WTC11 (cell line): ENCODE measurements at regions of chr11 and their contacts with region 1.

Region 1: DNA sequence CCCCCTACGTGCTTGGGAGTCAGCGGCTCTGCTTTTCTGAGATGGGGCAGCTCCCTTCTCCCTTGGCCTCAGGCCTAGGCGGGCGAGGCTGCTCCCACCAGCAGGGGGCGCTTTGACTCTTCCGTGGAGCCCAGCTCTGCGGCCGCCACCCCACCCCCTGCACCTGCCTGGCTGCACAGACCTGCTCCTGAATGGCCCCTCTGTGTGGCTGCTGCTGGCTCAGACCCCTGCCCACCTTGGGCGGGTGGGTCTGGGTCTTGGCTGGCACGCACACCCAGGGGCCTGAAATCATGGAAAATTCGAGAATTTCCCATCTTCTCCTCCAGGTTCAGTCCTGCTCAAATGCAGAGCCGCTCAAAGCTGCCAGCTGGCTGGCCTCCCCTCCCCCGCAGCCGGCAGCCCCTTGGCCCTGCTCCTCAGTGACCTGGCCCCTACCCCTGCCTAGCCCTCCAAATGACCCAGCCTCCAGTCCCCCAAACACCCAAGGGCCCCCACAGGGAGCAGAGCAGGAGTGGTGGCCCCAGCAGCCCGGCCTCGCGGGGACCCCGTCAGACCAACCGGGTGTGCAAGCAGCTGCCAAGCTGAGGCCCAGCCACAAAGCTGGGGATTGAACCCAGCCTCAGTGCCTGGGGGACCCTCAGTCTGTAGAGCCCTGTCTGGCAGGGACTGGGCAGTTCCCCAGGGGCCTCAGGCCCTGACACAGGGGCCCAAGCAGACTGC is 9.0 kb downstream of the PRR33 start:
- DNase-seq: peak; percentile 89
- ATAC-seq: peak; percentile 97
- H3K4me3 Mint-ChIP-seq: no peak overlapping the region
- H3K27ac Mint-ChIP-seq: no peak overlapping the region
- H3K4me1 Mint-ChIP-seq: no peaks in the 10 kb centered on the region
- H3K27me3 Mint-ChIP-seq: no peaks in the 10 kb centered on the region
- CTCF ChIP-seq: peak; percentile 95

Region 2: DNA sequence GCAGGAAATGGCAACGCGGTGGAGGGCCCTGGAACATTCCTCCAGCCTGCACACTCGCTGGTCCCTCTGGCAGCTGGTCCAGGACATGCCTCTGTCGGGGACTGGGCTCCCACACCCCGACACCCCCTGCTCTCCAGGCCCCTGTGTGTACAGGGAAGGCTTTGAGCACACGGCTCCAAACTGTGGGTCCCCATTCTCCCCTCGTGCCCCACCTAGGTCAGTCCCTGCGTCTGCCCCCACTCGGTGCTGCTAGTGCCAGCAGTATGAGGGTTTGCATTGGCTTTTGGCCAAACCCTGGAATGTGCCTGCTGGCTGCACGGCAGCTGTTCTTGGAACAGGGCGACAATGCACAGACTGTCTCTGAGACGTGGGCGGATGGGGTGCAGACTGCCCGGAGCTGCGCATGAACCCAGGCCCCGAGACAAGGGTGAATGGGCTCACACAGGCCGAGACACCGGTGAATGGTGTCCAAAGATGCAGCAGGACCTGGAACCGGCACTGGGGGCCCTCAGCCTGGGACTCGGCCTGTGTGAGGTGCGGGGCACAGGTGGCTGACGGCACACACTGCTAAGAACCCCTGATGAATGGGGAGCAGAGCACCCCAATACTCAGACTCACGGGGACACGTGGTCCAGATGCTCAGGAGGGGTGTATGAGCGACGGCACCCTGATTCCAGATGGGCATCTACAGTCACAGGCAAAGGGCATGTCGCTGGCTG is 55.4 kb before region 1 on chr11:
- CTCF ChIA-PET with region 1: interaction called, 25 read pairs
- POLR2A ChIA-PET with region 1: no interaction called
- DNase-seq: no peak
- ATAC-seq: no peak
- H3K4me3 Mint-ChIP-seq: no peak overlapping the region
- H3K27ac Mint-ChIP-seq: no peak overlapping the region
- H3K4me1 Mint-ChIP-seq: peaks cover 4% of the 10 kb centered on the region; the same call in 1 of the 2 replicates
- H3K27me3 Mint-ChIP-seq: no peaks in the 10 kb centered on the region; the same call in 1 of the 2 replicates
- CTCF ChIP-seq: no peak

Region 3: GRCh38 chr11:1864831-1865665 is 17.6 kb before region 1 on chr11:
- CTCF ChIA-PET with region 1: interaction called, 18 read pairs
- POLR2A ChIA-PET with region 1: no interaction called
- DNase-seq: no peak
- ATAC-seq: no peak
- H3K4me3 Mint-ChIP-seq: no peak overlapping the region
- H3K27ac Mint-ChIP-seq: no peak overlapping the region
- H3K4me1 Mint-ChIP-seq: no peaks in the 10 kb centered on the region; the same call in 1 of the 2 replicates
- H3K27me3 Mint-ChIP-seq: no peaks in the 10 kb centered on the region
- CTCF ChIP-seq: no peak

Region 4: DNA sequence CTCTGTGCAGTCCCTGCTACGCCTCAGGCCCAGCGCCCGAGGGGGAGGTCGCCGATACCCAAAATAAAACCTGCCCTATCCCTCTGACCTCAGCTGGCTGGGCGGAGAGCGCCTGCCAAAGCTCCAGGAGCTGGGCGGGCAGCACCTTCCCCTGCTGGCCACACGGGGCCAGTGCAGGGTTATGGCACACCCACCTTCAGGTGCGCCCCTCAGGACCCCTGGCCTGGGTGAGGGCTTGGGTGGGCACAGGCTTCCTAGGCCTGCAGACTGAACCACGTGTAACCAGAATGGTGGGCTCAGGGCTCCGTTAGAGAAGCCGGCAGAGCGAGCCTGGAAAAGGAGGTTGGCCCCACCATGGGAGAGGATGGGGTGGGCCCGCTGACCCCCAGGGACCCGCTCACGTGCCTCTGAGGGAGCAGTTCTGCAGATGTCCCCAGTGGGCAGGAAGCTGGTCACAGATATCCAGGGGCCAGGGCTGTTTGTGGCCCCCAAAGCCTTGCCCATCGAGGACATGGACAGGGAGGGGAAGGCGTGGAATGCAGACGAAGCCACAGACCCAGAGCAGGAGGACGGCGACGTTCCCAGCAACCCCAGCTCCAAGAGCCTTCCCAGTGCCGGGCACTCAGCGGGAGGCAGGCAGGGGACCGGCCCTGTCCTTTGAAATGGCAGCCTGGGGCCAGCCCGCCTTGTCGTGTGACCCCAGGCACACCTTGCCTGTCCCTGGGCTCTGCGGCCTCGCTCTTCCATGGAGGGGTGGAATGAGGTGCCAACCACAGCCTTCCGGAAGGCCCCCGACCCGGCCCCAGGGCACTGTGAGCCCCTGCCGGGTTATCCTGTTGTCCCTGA is 35.2 kb after region 1 on chr11:
- CTCF ChIA-PET with region 1: interaction called, 27 read pairs
- POLR2A ChIA-PET with region 1: no interaction called
- DNase-seq: peak; percentile 49
- ATAC-seq: peak; percentile 86
- H3K4me3 Mint-ChIP-seq: no peak overlapping the region
- H3K27ac Mint-ChIP-seq: no peak overlapping the region
- H3K4me1 Mint-ChIP-seq: no peaks in the 10 kb centered on the region
- H3K27me3 Mint-ChIP-seq: no peaks in the 10 kb centered on the region; the same call in 1 of the 2 replicates
- CTCF ChIP-seq: peak; percentile 55; the same call in 1 of the 2 replicates

Region 5: GRCh38 chr11:1970956-1971355 is 88.3 kb after region 1 on chr11:
- CTCF ChIA-PET with region 1: interaction called, 25 read pairs
- POLR2A ChIA-PET with region 1: interaction called, 3 read pairs
- DNase-seq: peak; percentile 6
- ATAC-seq: no peak
- H3K4me3 Mint-ChIP-seq: no peak overlapping the region
- H3K27ac Mint-ChIP-seq: no peak overlapping the region
- H3K4me1 Mint-ChIP-seq: no peaks in the 10 kb centered on the region
- H3K27me3 Mint-ChIP-seq: no peaks in the 10 kb centered on the region
- CTCF ChIP-seq: no peak

Region 6: GRCh38 chr11:2036863-2037486 is 154.3 kb after region 1 on chr11:
- CTCF ChIA-PET with region 1: interaction called, 16 read pairs
- POLR2A ChIA-PET with region 1: no interaction called
- DNase-seq: no peak
- ATAC-seq: peak; percentile 76
- H3K4me3 Mint-ChIP-seq: no peak overlapping the region
- H3K27ac Mint-ChIP-seq: no peak overlapping the region
- H3K4me1 Mint-ChIP-seq: no peaks in the 10 kb centered on the region
- H3K27me3 Mint-ChIP-seq: no peaks in the 10 kb centered on the region
- CTCF ChIP-seq: no peak